Ascending aorta (tissue), 2 donors: ENCODE measurements at regions of chr18 and their contacts with region 1.

Region 1: DNA sequence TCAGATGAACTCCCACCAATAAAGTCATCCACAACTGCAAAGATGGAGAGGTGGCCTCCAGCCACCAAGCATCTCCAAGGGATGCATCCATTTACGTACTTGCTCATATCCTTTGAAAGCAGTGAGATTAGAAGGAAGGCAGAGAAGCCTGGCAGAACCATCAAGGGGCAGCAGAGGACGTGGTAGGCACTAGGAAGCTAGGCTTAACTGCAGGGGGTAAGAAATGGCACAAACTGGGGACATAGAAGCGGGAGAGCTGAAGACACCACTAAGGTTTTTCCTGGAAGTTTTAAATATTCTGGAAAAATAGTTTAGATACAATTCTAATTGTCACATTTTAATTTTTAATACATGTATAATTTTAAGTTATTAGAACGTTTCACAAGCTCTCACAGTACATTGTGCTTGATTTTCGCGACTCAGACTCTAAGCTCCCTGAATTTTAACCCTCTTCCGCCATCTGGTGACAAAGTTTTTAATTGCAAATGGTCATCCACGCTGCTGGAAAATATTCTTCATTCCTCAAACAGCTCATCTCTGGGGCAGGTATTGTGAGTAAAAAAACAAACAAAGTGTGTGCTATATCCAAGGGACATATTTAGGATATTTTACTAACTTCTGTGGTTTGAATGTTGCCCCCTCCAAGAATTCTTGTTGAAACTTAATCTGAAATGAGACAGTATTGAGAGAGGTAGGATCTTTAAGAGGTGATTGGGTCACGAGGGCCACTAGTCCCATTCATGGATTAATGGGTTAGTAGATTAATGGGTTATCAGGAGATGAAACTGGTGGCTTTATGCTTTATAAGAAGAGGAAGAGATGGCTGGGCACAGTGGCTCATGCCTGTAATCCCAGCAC is 1.6 kb upstream of the PSTPIP2 start:
- DNase-seq: peak in 1 of 2 donors; percentile 69
- H3K4me3 ChIP-seq: peak overlapping the region in 1 of 2 donors; percentile 38
- H3K27ac ChIP-seq: no peak overlapping the region
- H3K4me1 ChIP-seq: peaks cover 4 to 8% of the 10 kb centered on the region in 2 donors
- H3K27me3 ChIP-seq: no peaks in the 10 kb centered on the region
- CTCF ChIP-seq: peak; percentile 37 to 69 (median 63)

Region 2: DNA sequence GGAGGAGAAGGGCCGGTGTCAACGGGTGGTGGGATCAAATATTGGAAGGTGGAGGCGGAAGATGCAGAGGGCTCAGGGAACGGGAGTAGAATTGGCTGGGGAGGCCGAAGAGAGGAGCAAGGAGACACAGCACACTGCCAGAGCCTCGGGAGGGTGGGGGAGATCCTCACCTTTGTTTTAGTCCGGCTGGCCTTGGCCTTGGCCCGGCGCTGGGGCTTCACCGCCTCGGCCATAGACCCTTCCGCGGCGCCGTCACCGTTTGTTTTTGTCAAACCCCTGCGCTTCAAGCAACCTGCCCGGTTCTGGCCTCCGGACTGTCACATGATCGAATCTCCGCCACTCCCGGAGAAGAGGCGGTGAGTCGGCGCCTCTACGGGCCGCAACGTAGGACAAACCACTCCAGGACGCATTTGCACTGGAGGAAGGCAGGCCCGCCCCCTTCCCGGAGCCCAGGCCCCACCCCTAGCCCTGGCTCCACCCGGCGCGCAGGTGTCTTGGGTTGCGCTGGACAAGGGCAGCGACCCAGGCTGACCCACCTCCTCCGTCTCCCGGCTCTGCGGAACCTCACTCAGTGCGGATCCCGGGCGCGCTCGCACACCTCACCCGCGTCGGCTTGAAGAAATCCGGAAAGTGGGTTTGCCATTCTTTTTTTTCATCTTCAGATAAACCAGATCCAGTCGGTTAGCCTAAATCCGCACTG is 106.5 kb before region 1 on chr18 and contains the start of gene EPG5:
- intact Hi-C with region 1: loop called (anchors 5 kb)
- DNase-seq: peak; percentile 92 to 97
- H3K4me3 ChIP-seq: peak within 1 kb of the TSS; percentile 62 to 76
- H3K27ac ChIP-seq: peak within 1 kb of the TSS in 1 of 2 donors; percentile 65
- H3K4me1 ChIP-seq: peaks cover 0 to 12% of the 10 kb centered on the region in 2 donors
- H3K27me3 ChIP-seq: no peaks in the 10 kb centered on the region
- CTCF ChIP-seq: no peak
- total RNA-seq, gene EPG5: 9.8 TPM

Region 3: DNA sequence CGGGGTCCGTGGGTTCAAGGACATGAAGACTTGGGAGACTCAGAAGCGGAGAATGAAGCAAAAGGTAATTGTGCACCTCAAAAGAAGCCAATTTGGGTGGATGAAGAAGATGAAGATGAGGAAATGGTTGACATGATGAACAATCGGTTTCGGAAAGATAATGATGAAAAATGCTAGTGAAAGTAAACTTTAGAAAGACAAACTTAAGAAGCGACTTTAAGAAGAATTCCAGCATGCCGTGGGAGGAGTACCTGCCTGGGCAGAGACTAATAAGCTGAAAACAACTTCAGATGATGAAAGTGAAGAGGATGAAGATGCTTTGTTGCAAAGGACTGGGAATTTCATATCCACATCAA is 45.2 kb before region 1 on chr18:
- intact Hi-C with region 1: loop called (anchors 5 kb)
- DNase-seq: no peak
- H3K4me3 ChIP-seq: peak overlapping the region; percentile 68 to 70
- H3K27ac ChIP-seq: peak overlapping the region; percentile 52 to 81
- H3K4me1 ChIP-seq: no peaks in the 10 kb centered on the region
- H3K27me3 ChIP-seq: no peaks in the 10 kb centered on the region
- CTCF ChIP-seq: no peak